ACHN (cell line): ENCODE measurements at regions of chr2 and their contacts with region 1.

Region 1: DNA sequence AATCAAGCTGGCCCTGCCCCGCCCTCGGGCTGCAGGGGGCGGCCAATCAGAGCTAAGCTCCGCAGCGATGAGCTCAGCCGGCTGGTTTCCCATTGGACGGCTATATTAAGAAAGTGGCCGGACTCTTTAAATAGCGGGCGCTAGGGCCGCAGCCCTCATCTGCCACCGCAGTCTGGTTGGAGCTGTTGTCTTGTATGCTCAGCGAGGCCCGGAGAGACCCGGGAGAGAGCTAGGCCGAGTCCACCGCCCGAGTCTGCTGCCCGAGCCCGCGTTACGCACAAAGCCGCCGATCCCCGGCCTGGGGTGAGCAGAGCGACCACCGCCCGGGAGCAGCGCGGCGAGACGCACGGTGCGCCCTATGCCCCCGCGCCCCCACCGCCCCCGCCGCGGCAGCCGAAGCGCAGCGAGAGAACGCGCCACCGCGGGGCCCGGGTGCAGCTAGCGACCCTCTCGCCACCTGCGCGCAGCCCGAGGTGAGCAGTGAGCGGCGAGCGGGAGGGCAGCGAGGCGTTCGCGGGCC is at the start of gene RHOB:
- DNase-seq: peak; percentile 99

Region 2: DNA sequence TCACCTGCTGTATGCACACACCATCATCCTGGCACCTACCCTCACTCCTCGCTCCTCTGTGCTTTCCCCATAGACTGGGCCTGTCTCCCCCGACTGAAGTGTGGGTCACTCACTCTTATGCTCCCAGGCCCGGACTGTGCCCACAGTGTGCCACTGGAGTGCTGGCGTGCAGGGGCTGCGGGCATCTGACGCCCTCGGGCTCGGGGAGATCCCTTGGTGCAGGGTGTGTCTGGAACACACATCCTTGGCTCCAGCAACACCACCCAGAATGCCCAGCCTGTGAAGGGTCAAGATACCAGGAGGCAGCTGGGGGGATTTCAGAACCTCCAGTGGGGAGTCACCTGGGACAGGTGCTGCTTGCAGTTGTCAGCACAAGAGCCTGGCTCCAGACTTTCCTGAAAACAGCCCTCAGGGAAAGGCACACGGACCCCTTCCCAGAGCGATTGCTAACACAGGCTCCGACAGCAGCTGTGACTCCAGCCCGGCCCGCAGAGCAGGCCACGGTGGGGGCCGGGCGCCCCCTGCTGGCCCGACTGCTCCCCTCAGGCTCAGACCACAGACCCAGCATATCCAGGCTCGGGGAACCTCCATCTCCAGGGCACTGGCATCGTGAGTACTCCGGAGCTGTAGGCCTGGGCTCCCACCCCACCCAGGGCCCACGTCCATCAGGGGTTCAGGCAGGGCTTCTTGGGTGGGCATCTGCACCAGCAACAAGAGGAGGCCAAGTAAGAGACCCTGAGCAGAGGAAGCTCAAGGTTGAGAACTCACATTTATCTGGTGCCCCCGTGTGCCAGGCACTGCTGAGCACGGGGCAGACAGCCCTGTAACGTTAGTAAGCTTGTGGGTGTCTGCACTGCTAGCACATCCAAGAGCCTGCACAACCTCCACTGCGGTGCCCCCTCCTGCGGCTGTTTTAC is 195.3 kb after region 1 on chr2:
- in situ Hi-C with region 1: loop called (anchors 25 kb)
- DNase-seq: peak; percentile 82